Cardiac septum (tissue), 1 donor: ENCODE measurements at regions of chr1 and their contacts with region 1.

Region 1: GRCh38 chr1:176656257-176656995 is 193.5 kb downstream of the PAPPA2 start:
- DNase-seq: no peak

Region 2: DNA sequence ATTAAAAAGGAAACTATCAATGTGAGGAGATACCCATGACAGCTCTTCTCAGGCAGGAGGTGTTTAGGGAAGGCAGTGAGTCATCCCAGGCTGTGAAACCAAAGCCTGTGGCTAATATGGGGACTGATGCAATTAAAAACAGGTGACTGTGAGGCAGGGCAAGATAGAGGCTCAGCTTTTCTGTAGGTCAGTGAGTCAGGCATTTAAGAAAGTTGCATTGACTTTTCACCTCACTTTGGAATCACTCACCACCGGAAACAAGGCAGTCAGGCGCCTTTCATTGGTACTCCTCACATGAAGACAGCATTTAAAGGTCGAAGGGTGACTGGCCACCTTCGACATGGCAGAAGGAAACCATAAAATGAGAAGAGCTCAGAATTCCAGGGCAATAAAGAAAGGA is 138.9 kb before region 1 on chr1:
- intact Hi-C with region 1: loop called (anchors 5 kb)
- DNase-seq: no peak

Region 3: GRCh38 chr1:176628775-176629174 is 27.7 kb before region 1 on chr1:
- intact Hi-C with region 1: no loop called
- DNase-seq: no peak